Activated CD8-positive, alpha-beta memory T cell treated with anti-CD3 and anti-CD28 coated beads, Interleukin-2, amount 10 ng/mL, durations not matched to agents 7 days and 5 days (primary cell): ENCODE measurements at regions of chr5 and their contacts with region 1.

Region 1: DNA sequence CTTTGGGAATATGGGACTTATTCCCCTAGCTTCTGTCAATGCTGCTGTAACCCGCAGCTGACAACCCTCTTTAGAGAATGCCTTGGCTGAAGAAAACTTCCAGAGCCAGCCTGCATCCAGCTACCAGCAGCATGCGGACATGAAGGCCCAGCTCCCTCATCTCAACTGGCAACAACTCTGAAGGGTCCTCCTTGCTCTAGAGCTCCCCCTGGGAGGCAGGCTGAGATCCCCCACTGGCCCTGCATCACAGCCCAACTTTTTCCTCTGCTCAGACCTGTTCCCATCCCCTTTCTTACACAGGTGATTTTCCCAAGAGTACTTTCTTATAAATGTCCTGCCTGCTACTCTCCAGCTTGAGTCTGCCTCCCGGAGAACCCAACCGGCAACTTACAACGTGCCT is 18.7 kb upstream of the WNT8A start:
- DNase-seq: no peak
- ATAC-seq: no peak
- H3K4me3 Mint-ChIP-seq: no peak overlapping the region
- H3K27ac Mint-ChIP-seq: no peak overlapping the region
- H3K4me1 Mint-ChIP-seq: peaks cover 10% of the 10 kb centered on the region
- H3K27me3 Mint-ChIP-seq: peaks cover 2% of the 10 kb centered on the region

Region 2: DNA sequence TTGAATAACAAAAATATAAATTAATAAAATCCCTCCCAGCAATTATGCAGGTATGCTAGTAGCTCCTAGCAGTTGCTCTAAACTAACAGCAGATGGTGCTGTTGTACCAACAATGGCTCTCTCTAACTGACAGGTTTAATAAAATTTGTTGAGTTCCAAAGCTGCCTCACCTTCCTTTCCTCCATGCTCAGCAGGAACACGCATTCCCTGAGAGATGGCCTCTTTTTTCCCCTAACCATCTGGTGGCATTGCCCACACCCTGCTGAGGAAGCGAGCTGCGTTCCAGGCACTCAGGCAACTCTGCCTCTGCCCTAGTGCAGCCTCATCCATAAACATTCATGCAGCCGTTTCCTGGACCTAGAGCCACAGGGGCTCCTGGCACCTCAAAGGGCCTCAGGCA is 435.5 kb before region 1 on chr5:
- CTCF ChIA-PET with region 1: interaction called, 15 read pairs
- DNase-seq: no peak
- ATAC-seq: peak; percentile 69
- H3K4me3 Mint-ChIP-seq: no peak overlapping the region
- H3K27ac Mint-ChIP-seq: no peak overlapping the region
- H3K4me1 Mint-ChIP-seq: no peaks in the 10 kb centered on the region
- H3K27me3 Mint-ChIP-seq: no peaks in the 10 kb centered on the region

Region 3: GRCh38 chr5:137778772-137779564 is 286.1 kb before region 1 on chr5:
- CTCF ChIA-PET with region 1: interaction called, 26 read pairs
- DNase-seq: no peak
- ATAC-seq: no peak
- H3K4me3 Mint-ChIP-seq: no peak overlapping the region
- H3K27ac Mint-ChIP-seq: no peak overlapping the region
- H3K4me1 Mint-ChIP-seq: no peaks in the 10 kb centered on the region
- H3K27me3 Mint-ChIP-seq: peaks cover 6% of the 10 kb centered on the region

Region 4: GRCh38 chr5:137997726-137998213 is 67.3 kb before region 1 on chr5:
- CTCF ChIA-PET with region 1: no interaction called
- DNase-seq: no peak
- ATAC-seq: peak; percentile 85
- H3K4me3 Mint-ChIP-seq: no peak overlapping the region
- H3K27ac Mint-ChIP-seq: peak overlapping the region; percentile 54
- H3K4me1 Mint-ChIP-seq: peaks cover 36% of the 10 kb centered on the region
- H3K27me3 Mint-ChIP-seq: no peaks in the 10 kb centered on the region

Region 5: DNA sequence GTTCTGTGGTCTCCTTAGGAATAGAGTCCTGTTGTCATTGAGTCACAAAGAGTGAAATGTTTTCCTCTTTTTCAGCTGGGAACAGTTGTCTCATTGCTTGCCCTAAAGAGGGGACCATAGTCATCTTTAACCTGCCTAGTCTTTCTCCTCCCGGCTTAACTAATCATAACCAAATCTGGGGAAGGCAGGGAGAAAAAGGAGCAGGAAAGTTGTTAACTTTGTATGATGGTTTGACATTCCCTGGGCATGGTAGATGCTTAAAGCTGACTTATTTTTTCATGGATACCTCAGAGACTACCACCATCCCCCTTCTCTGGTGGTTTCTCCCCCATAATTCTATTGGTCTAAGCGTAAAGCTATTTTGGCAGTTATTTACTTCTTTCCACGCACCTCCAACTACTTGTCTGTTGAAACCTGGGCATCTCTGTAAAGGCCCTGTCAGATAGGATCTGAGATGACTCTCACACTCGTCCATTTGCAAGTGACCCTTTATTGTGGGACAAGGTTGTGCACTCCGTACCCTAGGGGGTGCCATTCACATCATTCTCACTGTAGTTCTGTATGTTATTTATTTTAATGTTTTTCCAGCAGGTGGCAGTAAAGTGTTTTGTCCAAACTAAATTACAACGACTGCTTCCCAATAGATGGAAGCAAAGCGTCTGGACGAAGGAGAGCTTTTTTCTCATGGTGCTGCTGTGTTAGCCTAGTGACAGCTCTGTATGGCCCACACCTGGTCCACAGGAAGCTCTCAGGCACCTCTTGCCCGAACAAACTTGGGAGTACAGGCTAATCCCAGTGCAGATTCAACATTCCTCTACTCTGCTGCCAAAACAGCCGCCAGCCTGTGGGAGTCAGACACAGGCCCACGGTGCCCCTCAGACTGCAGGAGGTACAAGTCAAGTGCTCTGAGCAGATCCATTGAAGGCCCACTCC is 29.2 kb before region 1 on chr5:
- CTCF ChIA-PET with region 1: interaction called, 244 read pairs
- DNase-seq: peak; percentile 81
- ATAC-seq: peak; percentile 51
- H3K4me3 Mint-ChIP-seq: no peak overlapping the region
- H3K27ac Mint-ChIP-seq: peak overlapping the region; percentile 18
- H3K4me1 Mint-ChIP-seq: peaks cover 32% of the 10 kb centered on the region
- H3K27me3 Mint-ChIP-seq: no peaks in the 10 kb centered on the region

Region 6: GRCh38 chr5:138054847-138055558 is 10.1 kb before region 1 on chr5:
- CTCF ChIA-PET with region 1: interaction called, 12 read pairs
- DNase-seq: no peak
- ATAC-seq: no peak
- H3K4me3 Mint-ChIP-seq: no peak overlapping the region
- H3K27ac Mint-ChIP-seq: no peak overlapping the region
- H3K4me1 Mint-ChIP-seq: peaks cover 11% of the 10 kb centered on the region
- H3K27me3 Mint-ChIP-seq: peaks cover 17% of the 10 kb centered on the region

Region 7: DNA sequence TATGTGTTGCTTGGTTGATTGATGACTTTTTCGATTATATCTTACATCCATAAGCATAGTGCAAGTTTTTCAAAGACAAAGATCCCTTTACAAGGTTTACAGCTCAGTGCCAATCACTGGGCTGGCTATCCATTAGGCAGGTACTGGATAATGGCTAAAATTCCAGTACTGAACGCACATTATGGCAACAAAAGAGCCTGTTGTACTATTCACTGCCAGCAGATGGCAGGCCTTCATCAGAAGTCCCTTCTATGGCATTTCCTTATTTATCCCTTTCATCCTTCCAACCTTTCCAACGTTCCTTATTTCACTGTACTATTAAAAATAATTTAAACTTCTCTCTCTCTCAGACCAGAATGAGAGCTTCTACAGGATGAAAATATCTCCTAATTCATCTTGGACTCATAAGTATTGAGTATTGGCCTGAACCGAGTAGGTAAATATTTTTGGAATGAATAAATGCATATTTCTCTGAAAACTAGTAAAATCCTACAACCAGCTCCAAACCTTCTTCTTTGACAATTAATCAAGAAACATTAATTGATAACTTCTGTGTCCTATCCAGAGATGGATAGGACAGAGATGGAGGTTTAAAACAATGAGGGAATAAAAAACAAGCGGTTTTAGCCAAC is 12.1 kb after region 1 on chr5:
- CTCF ChIA-PET with region 1: interaction called, 58 read pairs
- DNase-seq: peak; percentile 61
- ATAC-seq: no peak
- H3K4me3 Mint-ChIP-seq: no peak overlapping the region
- H3K27ac Mint-ChIP-seq: no peak overlapping the region
- H3K4me1 Mint-ChIP-seq: peaks cover 17% of the 10 kb centered on the region
- H3K27me3 Mint-ChIP-seq: peaks cover 11% of the 10 kb centered on the region

Region 8: DNA sequence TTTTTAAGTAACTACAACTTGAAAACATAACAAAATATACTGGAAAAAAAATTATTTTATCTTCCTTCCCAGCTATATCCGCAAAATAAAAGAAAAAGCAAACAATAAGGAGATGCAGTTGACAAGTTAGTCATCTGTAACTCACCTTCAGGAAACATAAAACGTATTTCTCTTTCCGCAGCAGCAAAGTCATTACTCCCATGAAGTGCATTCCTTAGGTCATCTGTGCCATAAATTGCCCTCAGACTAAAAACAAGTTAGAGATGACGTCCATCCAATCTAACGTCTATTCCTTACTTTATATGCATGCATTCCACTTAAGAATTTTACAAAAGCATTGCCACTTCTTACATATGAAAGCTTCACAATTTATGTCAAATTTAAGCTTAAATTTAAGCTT is 63.2 kb after region 1 on chr5:
- CTCF ChIA-PET with region 1: interaction called, 16 read pairs
- DNase-seq: no peak
- ATAC-seq: no peak
- H3K4me3 Mint-ChIP-seq: no peak overlapping the region
- H3K27ac Mint-ChIP-seq: no peak overlapping the region
- H3K4me1 Mint-ChIP-seq: peaks cover 2% of the 10 kb centered on the region
- H3K27me3 Mint-ChIP-seq: peaks cover 33% of the 10 kb centered on the region